Activated CD4-positive, alpha-beta T cell treated with anti-CD3 and anti-CD28 coated beads for 36 hours (primary cell): ENCODE measurements at regions of chr2 and their contacts with region 1.

Region 1: DNA sequence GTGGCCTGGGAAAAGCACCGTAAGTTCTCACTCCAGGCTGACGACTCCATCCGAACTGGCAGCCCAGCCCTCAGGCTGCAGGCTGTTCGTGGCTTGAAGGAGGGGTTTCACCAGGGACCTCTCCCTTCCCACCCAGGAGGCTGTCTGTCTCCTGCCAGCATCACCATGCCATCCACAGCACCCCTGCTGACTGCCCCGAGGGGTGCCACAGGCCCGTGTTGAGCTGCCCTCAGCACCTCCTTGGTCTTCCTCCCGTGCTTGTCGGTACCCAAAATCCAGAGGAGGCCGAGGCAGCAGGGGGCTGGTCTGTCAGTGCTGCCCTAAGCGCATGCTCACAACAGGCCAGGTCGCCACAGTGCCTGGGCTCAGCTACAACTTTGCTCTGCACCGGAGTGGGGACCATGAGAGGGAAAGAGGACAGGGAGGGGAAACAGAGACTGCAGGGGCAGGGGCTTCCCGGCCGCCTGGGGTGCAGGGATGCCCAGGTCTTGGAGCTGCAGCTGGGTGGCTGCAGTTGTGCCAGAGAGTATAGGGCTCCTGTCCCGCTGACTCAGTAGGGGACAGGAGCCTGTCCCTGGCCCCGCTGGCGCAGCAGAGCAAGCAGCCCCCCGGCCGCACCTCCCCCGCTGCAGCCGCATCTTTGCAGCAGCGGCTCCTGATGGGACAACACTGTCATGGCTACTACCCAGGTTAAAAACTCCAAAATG is 963.7 kb upstream of the CRIM1 start:
- DNase-seq: no peak
- ATAC-seq: no peak
- H3K4me3 Mint-ChIP-seq: no peak overlapping the region
- H3K27ac Mint-ChIP-seq: no peak overlapping the region
- H3K4me1 Mint-ChIP-seq: no peaks in the 10 kb centered on the region
- H3K27me3 Mint-ChIP-seq: no peaks in the 10 kb centered on the region

Region 2: GRCh38 chr2:35356332-35356731 is 35.6 kb before region 1 on chr2:
- CTCF ChIA-PET with region 1: no interaction called
- POLR2A ChIA-PET with region 1: no interaction called
- intact Hi-C with region 1: loop called (anchors 1 kb)
- DNase-seq: no peak
- ATAC-seq: no peak
- H3K4me3 Mint-ChIP-seq: no peak overlapping the region
- H3K27ac Mint-ChIP-seq: no peak overlapping the region
- H3K4me1 Mint-ChIP-seq: no peaks in the 10 kb centered on the region
- H3K27me3 Mint-ChIP-seq: no peaks in the 10 kb centered on the region